CD8-positive, alpha-beta T cell (primary cell): ENCODE measurements at regions of chr6 and their contacts with region 1.

Region 1: GRCh38 chr6:17599885-17600526 is at the start of gene FAM8A1:
- DNase-seq: peak; percentile 90 to 99 (median 96)
- ATAC-seq: peak; percentile 86
- H3K4me3 ChIP-seq: peak within 1 kb of the TSS; percentile 62 to 78
- H3K4me3 Mint-ChIP-seq: peak within 1 kb of the TSS; percentile 88
- H3K27ac ChIP-seq: peak within 1 kb of the TSS; percentile 82 to 91
- H3K27ac Mint-ChIP-seq: peak within 1 kb of the TSS; percentile 94
- H3K4me1 ChIP-seq: peaks cover 32% of the 10 kb centered on the region
- H3K4me1 Mint-ChIP-seq: peaks cover 46% of the 10 kb centered on the region
- H3K27me3 ChIP-seq: no peaks in the 10 kb centered on the region
- H3K27me3 Mint-ChIP-seq: no peaks in the 10 kb centered on the region
- CTCF ChIP-seq: peak; percentile 41
- total RNA-seq, gene FAM8A1: 17.6 to 17.8 TPM

Region 2: GRCh38 chr6:16481697-16482399 is 1118.2 kb before region 1 on chr6:
- CTCF ChIA-PET with region 1: no interaction called
- POLR2A ChIA-PET with region 1: no interaction called
- intact Hi-C with region 1: loop called in 1 of 2 experiments (anchors 10 kb)
- DNase-seq: peak; percentile 30 to 95 (median 61)
- ATAC-seq: peak; percentile 81
- H3K4me3 ChIP-seq: no peak overlapping the region
- H3K4me3 Mint-ChIP-seq: peak overlapping the region; percentile 52
- H3K27ac ChIP-seq: peak overlapping the region; percentile 28 to 83
- H3K27ac Mint-ChIP-seq: peak overlapping the region; percentile 95
- H3K4me1 ChIP-seq: peaks cover 61% of the 10 kb centered on the region
- H3K4me1 Mint-ChIP-seq: peaks cover 77% of the 10 kb centered on the region
- H3K27me3 ChIP-seq: no peaks in the 10 kb centered on the region
- H3K27me3 Mint-ChIP-seq: no peaks in the 10 kb centered on the region
- CTCF ChIP-seq: no peak

Region 3: GRCh38 chr6:17552861-17553260 is 47.1 kb before region 1 on chr6:
- CTCF ChIA-PET with region 1: no interaction called
- POLR2A ChIA-PET with region 1: no interaction called
- intact Hi-C with region 1: no loop called
- DNase-seq: no peak
- ATAC-seq: no peak
- H3K4me3 ChIP-seq: no peak overlapping the region
- H3K4me3 Mint-ChIP-seq: no peak overlapping the region
- H3K27ac ChIP-seq: no peak overlapping the region
- H3K27ac Mint-ChIP-seq: no peak overlapping the region
- H3K4me1 ChIP-seq: no peaks in the 10 kb centered on the region
- H3K4me1 Mint-ChIP-seq: no peaks in the 10 kb centered on the region
- H3K27me3 ChIP-seq: no peaks in the 10 kb centered on the region
- H3K27me3 Mint-ChIP-seq: peaks cover 9% of the 10 kb centered on the region
- CTCF ChIP-seq: no peak

Region 4: GRCh38 chr6:17610835-17611234 is 10.8 kb after region 1 on chr6:
- CTCF ChIA-PET with region 1: no interaction called
- POLR2A ChIA-PET with region 1: interaction called, 10 read pairs
- intact Hi-C with region 1: loop called in 1 of 2 experiments (anchors 2 kb)
- DNase-seq: no peak
- ATAC-seq: no peak
- H3K4me3 ChIP-seq: no peak overlapping the region
- H3K4me3 Mint-ChIP-seq: no peak overlapping the region
- H3K27ac ChIP-seq: peak overlapping the region in 1 of 2 experiments; percentile 9
- H3K27ac Mint-ChIP-seq: no peak overlapping the region
- H3K4me1 ChIP-seq: no peaks in the 10 kb centered on the region
- H3K4me1 Mint-ChIP-seq: peaks cover 11% of the 10 kb centered on the region
- H3K27me3 ChIP-seq: no peaks in the 10 kb centered on the region
- H3K27me3 Mint-ChIP-seq: no peaks in the 10 kb centered on the region
- CTCF ChIP-seq: no peak

Region 5: DNA sequence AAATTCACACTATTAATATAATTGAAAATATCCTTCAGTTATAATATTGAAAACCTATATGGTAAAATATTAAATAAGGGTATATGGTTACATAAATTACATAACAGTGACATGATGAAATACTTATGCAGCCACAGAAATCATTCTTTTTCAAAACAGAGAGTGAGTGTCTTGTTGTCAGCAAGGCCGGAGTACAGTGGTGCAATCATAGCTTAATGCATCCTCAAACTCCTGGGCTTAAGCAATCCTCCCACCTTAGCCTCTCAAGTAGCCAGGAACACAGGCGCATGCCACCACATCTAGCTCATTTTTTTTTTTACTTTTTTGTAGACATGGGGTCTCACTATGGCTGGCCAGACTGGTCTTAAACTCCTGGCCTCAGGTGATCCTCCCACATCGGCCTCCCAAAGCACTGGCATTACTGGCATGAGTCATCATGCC is 40.5 kb after region 1 on chr6:
- CTCF ChIA-PET with region 1: no interaction called
- POLR2A ChIA-PET with region 1: interaction called, 3 read pairs
- intact Hi-C with region 1: loop called in 1 of 2 experiments (anchors 5 kb)
- DNase-seq: no peak
- ATAC-seq: no peak
- H3K4me3 ChIP-seq: no peak overlapping the region
- H3K4me3 Mint-ChIP-seq: no peak overlapping the region
- H3K27ac ChIP-seq: no peak overlapping the region
- H3K27ac Mint-ChIP-seq: peak overlapping the region; percentile 13
- H3K4me1 ChIP-seq: no peaks in the 10 kb centered on the region
- H3K4me1 Mint-ChIP-seq: peaks cover 8% of the 10 kb centered on the region
- H3K27me3 ChIP-seq: no peaks in the 10 kb centered on the region
- H3K27me3 Mint-ChIP-seq: no peaks in the 10 kb centered on the region
- CTCF ChIP-seq: no peak

Region 6: DNA sequence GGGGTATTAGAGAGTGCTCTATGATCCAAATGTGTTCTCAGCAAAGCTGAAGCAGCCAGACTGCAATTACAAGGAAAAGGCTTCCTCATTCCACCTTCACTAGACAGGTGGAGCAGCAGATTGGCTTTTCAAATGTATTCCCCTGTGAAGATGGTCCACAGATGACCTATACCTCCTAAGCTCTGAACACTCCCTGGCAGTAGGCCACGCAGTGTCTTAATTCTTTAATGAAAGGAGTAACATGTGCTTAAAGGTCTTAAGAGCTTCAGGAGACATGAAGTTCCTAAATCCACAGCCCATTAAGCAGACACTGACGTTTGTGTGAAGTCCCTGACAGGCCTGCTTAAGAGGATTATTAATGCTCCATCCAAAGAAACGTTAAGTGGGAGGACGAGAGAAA is 245.6 kb after region 1 on chr6:
- CTCF ChIA-PET with region 1: no interaction called
- POLR2A ChIA-PET with region 1: no interaction called
- intact Hi-C with region 1: no loop called
- DNase-seq: no peak
- ATAC-seq: no peak
- H3K4me3 ChIP-seq: no peak overlapping the region
- H3K4me3 Mint-ChIP-seq: no peak overlapping the region
- H3K27ac ChIP-seq: no peak overlapping the region
- H3K27ac Mint-ChIP-seq: no peak overlapping the region
- H3K4me1 ChIP-seq: no peaks in the 10 kb centered on the region
- H3K4me1 Mint-ChIP-seq: no peaks in the 10 kb centered on the region
- H3K27me3 ChIP-seq: no peaks in the 10 kb centered on the region
- H3K27me3 Mint-ChIP-seq: no peaks in the 10 kb centered on the region
- CTCF ChIP-seq: no peak

Region 7: GRCh38 chr6:18155150-18155863 is 555.3 kb after region 1 on chr6 and contains the start of gene KDM1B:
- CTCF ChIA-PET with region 1: no interaction called
- POLR2A ChIA-PET with region 1: interaction called, 3 read pairs
- intact Hi-C with region 1: loop called (anchors 1 to 5 kb)
- DNase-seq: peak; percentile 97 to 99 (median 99)
- ATAC-seq: peak; percentile 93
- H3K4me3 ChIP-seq: peak within 1 kb of the TSS; percentile 89 to 99
- H3K4me3 Mint-ChIP-seq: peak within 1 kb of the TSS; percentile 98
- H3K27ac ChIP-seq: peak within 1 kb of the TSS; percentile 90
- H3K27ac Mint-ChIP-seq: peak within 1 kb of the TSS; percentile 96
- H3K4me1 ChIP-seq: peaks cover 15% of the 10 kb centered on the region
- H3K4me1 Mint-ChIP-seq: peaks cover 38% of the 10 kb centered on the region
- H3K27me3 ChIP-seq: no peaks in the 10 kb centered on the region
- H3K27me3 Mint-ChIP-seq: no peaks in the 10 kb centered on the region
- CTCF ChIP-seq: no peak
- total RNA-seq, gene KDM1B: 4.5 to 6.2 TPM